Mammary epithelial cell (primary cell): ENCODE measurements at regions of chr13 and their contacts with region 1.

Region 1: GRCh38 chr13:20489185-20489820 is 36.4 kb downstream of the CRYL1 start:
- DNase-seq: no peak
- H3K4me3 ChIP-seq: no peak overlapping the region
- H3K27ac ChIP-seq: no peak overlapping the region
- H3K4me1 ChIP-seq: peaks cover 1% of the 10 kb centered on the region
- H3K27me3 ChIP-seq: no peaks in the 10 kb centered on the region
- CTCF ChIP-seq: peak in 1 of 2 donors; percentile 28

Region 2: DNA sequence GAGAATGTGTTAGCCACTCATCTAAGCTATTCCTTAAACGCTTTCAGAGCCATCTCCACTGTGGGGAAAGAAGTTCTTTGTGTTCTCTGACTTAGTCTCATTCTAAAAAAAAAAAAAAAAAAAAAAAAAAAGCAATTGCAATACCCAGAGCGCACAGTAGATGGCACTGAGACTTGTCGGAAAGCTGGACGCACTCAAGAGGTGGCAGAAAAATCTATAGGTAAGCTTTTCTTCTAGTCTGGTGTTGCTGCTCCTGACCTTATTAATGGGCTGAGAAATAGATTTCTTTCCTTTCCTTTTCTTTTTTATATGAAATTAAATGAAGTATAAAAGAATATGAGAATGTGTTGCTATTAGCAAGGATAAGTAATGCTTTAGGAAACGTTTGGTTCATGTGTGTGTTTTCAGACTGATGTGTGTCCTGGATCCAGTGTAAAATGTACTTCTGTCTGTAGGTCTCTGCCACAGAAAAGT is 291.9 kb before region 1 on chr13:
- CTCF ChIA-PET with region 1: no interaction called
- dilution Hi-C with region 1: no loop called
- in situ Hi-C with region 1: loop called in 1 of 2 experiments (anchors 10 kb)
- intact Hi-C with region 1: loop called (anchors 1 kb)
- DNase-seq: peak; percentile 67
- H3K4me3 ChIP-seq: no peak overlapping the region
- H3K27ac ChIP-seq: no peak overlapping the region
- H3K4me1 ChIP-seq: peaks cover 30% of the 10 kb centered on the region
- H3K27me3 ChIP-seq: no peaks in the 10 kb centered on the region
- CTCF ChIP-seq: peak; percentile 81 to 82

Region 3: DNA sequence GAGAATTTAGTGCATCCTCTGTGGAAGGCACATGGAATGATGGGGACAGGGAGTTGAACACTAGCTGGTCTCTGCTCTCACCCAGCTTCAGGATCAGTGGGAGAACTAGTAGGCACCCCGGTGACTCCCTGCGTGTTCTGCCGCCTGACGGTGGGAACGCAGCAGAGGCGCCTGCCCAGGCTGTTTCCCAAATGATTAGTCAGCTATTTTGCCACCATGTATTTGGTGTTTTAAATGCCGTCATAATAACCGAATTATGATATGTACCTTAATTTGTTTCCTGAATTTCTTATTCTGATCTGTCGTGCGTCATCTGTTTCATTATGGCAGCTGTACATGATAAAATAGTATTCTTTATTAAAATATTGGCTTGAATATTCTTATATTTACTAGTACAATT is 141.3 kb before region 1 on chr13:
- CTCF ChIA-PET with region 1: no interaction called
- dilution Hi-C with region 1: no loop called
- in situ Hi-C with region 1: no loop called
- intact Hi-C with region 1: no loop called
- DNase-seq: no peak
- H3K4me3 ChIP-seq: no peak overlapping the region
- H3K27ac ChIP-seq: no peak overlapping the region
- H3K4me1 ChIP-seq: peaks cover 30% of the 10 kb centered on the region
- H3K27me3 ChIP-seq: no peaks in the 10 kb centered on the region
- CTCF ChIP-seq: no peak

Region 4: DNA sequence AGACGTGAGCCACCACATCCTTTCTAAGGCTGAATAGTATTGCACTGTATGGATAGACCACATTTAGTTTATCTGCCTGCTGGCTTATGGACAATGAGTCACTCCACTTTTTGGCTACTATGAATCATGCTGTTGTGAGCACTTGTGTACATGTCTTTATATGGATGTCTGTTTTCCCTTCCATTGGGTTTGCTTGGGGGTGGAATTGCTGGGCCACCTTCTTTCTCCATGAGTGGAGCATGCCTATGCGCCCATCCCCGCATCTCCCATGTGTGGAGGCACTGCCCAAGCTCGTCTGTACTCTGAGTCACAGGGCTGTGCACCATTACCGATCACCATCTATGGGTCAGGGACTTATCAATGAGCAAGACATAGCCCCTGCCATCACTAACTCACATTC is 130.0 kb before region 1 on chr13:
- CTCF ChIA-PET with region 1: no interaction called
- dilution Hi-C with region 1: no loop called
- in situ Hi-C with region 1: no loop called
- intact Hi-C with region 1: loop called (anchors 1 kb)
- DNase-seq: peak; percentile 99
- H3K4me3 ChIP-seq: no peak overlapping the region
- H3K27ac ChIP-seq: peak overlapping the region; percentile 83
- H3K4me1 ChIP-seq: peaks cover 29% of the 10 kb centered on the region
- H3K27me3 ChIP-seq: no peaks in the 10 kb centered on the region
- CTCF ChIP-seq: no peak

Region 5: GRCh38 chr13:20424949-20425348 is 64.4 kb before region 1 on chr13:
- CTCF ChIA-PET with region 1: no interaction called
- dilution Hi-C with region 1: no loop called
- in situ Hi-C with region 1: no loop called
- intact Hi-C with region 1: loop called (anchors 5 kb)
- DNase-seq: no peak
- H3K4me3 ChIP-seq: no peak overlapping the region
- H3K27ac ChIP-seq: no peak overlapping the region
- H3K4me1 ChIP-seq: peaks cover 44% of the 10 kb centered on the region
- H3K27me3 ChIP-seq: no peaks in the 10 kb centered on the region
- CTCF ChIP-seq: no peak

Region 6: GRCh38 chr13:20465218-20465879 is 24.0 kb before region 1 on chr13:
- CTCF ChIA-PET with region 1: interaction called, 13 read pairs
- dilution Hi-C with region 1: no loop called
- in situ Hi-C with region 1: no loop called
- intact Hi-C with region 1: no loop called
- DNase-seq: peak; percentile 28
- H3K4me3 ChIP-seq: no peak overlapping the region
- H3K27ac ChIP-seq: no peak overlapping the region
- H3K4me1 ChIP-seq: peaks cover 3% of the 10 kb centered on the region
- H3K27me3 ChIP-seq: no peaks in the 10 kb centered on the region
- CTCF ChIP-seq: no peak

Region 7: DNA sequence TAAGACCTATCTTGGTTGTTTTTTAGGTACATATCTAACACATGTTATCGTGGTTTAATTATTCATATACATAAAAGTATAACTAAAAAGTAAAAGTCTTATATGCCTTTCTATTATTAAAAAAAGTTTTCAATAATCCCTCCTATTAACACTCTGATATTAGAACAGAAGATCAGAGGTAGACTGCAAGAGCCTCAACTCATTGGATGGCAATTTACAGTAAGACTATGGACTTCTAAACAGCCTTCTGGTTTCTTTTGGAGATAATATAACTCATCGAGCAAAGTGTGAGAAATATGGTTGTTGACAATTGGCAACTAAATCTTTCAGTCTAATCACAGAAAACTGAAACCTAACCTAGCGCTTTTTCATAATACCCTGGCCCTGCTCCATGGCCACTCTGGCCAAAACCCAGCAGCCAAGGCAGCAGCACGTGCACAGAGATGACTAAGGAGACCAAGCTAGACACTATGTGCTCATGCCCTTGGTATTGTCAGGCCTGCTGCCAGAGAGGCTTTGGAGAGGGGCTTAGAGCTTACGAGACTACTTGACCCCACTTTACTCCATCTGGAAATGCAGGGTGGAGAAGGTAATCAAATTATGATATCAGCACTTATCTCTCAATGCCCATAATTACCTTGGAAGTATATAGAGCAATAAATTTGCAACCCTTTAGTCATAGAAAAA is 325.1 kb after region 1 on chr13:
- CTCF ChIA-PET with region 1: no interaction called
- dilution Hi-C with region 1: loop called (anchors 10 kb)
- in situ Hi-C with region 1: no loop called
- intact Hi-C with region 1: no loop called
- DNase-seq: peak; percentile 41
- H3K4me3 ChIP-seq: no peak overlapping the region
- H3K27ac ChIP-seq: peak overlapping the region; percentile 28
- H3K4me1 ChIP-seq: peaks cover 13% of the 10 kb centered on the region
- H3K27me3 ChIP-seq: no peaks in the 10 kb centered on the region
- CTCF ChIP-seq: no peak